ENCODE measurements at regions of chr3 and their contacts with region 1.

Region 1: DNA sequence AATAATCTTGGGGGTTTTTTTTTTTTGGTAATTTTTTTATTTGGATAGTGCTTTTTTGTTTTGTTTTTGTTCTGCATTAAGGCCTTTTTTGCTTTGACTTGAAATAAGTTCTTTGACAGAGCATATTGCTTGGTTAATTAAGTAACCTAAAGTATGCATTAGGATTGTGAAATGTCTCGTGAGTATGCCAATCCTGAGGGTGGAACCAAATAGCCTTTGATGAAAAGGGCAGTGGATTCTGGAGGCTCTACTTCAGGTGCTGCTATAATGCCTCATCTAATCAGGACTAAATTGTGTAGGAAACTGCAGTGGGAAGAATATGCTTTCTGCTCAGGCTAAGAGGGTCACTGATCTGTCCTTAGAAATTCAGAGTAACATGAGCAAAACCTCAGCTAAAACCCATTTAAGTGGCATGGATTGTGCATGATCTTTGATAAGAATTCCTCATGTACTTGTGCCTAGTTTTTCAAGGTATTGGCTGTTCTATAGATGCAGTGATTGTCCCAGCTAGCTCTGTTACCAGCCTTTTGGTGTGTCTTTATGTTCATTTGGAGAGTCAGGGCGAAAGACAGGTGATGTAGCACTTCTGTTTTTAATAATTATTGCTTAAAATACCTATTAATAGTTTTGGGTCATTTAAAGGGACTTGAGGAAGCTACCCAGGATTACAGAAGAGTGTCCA is 15.4 kb downstream of the CDV3 start:
- DNase-seq: no peak
- H3K4me3 ChIP-seq: no peak overlapping the region
- H3K27ac ChIP-seq: peak overlapping the region in 3 of 59 donors; percentile 14 to 43 (median 19)
- H3K27me3 ChIP-seq: no peaks in the 10 kb centered on the region
- CTCF ChIP-seq: no peak

Region 2: DNA sequence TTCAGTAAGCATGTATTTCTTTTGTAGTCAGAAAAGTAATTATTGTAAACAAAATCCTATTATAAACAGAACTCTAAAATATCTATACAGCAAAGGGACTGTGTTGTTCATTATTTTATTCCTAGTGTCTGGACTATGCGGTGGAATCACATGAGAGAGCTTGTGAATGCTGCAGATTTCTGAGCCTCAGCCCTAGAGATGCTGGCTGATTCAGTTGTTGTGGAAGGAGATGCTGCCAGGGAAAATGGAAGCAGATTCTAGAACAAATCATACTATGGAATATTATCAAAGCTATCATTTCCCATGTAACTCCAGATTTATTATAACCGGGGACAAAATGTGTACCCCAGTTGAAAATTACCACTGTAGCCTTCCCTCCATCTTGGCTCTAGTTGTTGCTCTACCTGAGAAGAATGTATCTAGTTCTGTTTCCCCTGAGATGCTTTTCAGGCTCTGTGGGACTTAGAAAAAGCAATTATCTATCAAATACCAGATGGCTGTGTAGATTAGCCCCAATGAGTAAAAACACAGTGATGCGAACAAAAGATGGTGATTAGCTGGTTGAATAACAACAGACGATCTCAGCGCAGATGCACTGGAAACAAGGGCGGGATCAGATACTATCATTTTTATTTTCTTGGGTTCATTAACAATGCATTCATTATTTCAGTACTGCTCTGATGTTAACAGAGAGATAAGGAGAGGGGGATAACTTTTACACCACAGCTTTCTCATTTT is 419.4 kb before region 1 on chr3:
- intact Hi-C with region 1: loop called in 1 of 2 experiments (anchors 10 kb)
- DNase-seq: no peak
- H3K4me3 ChIP-seq: peak overlapping the region in 8 of 59 donors; percentile 1 to 34 (median 26)
- H3K27ac ChIP-seq: peak overlapping the region in 13 of 59 donors; percentile 2 to 50 (median 13)
- H3K27me3 ChIP-seq: no peaks in the 10 kb centered on the region
- CTCF ChIP-seq: no peak

Region 3: GRCh38 chr3:133457465-133458067 is 131.4 kb before region 1 on chr3:
- intact Hi-C with region 1: no loop called
- DNase-seq: no peak
- H3K4me3 ChIP-seq: no peak overlapping the region
- H3K27ac ChIP-seq: no peak overlapping the region
- H3K27me3 ChIP-seq: no peaks in the 10 kb centered on the region
- CTCF ChIP-seq: peak in 2 of 56 donors; percentile 18 to 24